ENCODE measurements at regions of chr1 and their contacts with region 1.

Region 1: GRCh38 chr1:91511386-91511785 is 10.7 kb downstream of the CDC7 start:
- DNase-seq: no peak
- ATAC-seq: peak in 3 of 4 donors; percentile 60 to 66 (median 63)
- H3K4me3 ChIP-seq: no peak overlapping the region
- H3K27ac ChIP-seq: no peak overlapping the region
- H3K4me1 ChIP-seq: no peaks in the 10 kb centered on the region
- H3K27me3 ChIP-seq: no peaks in the 10 kb centered on the region
- CTCF ChIP-seq: peak in 3 of 4 donors; percentile 31 to 50 (median 47)

Region 2: GRCh38 chr1:91617285-91617765 is 105.9 kb after region 1 on chr1:
- intact Hi-C with region 1: no loop called
- DNase-seq: peak; percentile 79 to 90 (median 82)
- ATAC-seq: peak; percentile 99 to 100 (median 100)
- H3K4me3 ChIP-seq: no peak overlapping the region
- H3K27ac ChIP-seq: peak overlapping the region in 1 of 4 donors; percentile 25
- H3K4me1 ChIP-seq: peaks cover 0 to 3% (median 0%) of the 10 kb centered on the region in 3 donors
- H3K27me3 ChIP-seq: no peaks in the 10 kb centered on the region
- CTCF ChIP-seq: peak in 3 of 4 donors; percentile 44 to 55 (median 47)

Region 3: GRCh38 chr1:91929250-91929649 is 417.9 kb after region 1 on chr1:
- intact Hi-C with region 1: loop called (anchors 5 to 10 kb)
- DNase-seq: no peak
- ATAC-seq: no peak
- H3K4me3 ChIP-seq: no peak overlapping the region
- H3K27ac ChIP-seq: no peak overlapping the region
- H3K4me1 ChIP-seq: no peaks in the 10 kb centered on the region
- H3K27me3 ChIP-seq: no peaks in the 10 kb centered on the region
- CTCF ChIP-seq: no peak